ENCODE measurements at regions of chr11 and their contacts with region 1.

Region 1: DNA sequence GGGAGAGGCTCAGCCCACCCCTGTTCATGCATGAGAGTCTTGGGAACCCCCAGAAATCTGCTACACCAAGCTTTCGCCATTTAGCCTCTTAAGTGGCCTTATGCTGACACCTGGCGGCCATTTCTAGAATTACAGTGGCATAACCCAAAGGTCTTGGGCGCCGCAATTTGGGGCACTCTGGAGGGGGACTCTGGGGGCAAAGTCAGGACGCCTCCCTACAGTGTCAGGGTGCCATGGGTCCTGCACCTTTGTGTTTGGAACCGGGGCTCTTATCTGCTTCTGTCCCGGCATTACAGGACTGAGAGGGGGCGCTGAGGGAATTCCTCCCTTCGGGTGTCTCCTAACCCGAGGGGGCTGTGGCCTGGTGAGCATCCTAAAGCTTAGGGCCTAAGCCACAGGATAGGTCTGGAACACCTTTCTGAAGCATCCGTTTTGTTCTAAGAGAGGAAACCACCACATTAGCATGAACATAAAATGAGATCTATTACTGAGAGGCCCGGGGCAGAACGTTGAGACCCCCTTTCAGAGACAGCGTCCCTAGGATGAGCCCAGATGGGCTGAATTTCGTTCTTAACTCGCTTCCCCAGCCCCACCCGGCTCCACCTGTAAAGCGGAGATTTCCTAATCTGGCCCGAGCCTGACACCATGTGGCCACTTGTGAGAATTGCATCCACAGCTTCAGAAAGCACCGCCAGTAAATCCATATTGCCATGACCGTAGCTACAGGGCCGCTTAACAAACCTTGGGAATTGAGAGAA is 9.3 kb downstream of the INS start:
- DNase-seq: peak; percentile 80 to 87 (median 82)
- ATAC-seq: peak; percentile 80
- H3K4me3 ChIP-seq: no peak overlapping the region
- H3K27ac ChIP-seq: no peak overlapping the region
- H3K4me1 ChIP-seq: peaks cover 0 to 26% of the 10 kb centered on the region in 2 experiments; a peak in 1 of 5 replicates
- H3K27me3 ChIP-seq: peaks cover 0 to 44% of the 10 kb centered on the region in 2 experiments; a peak in 3 of 5 replicates
- CTCF ChIP-seq: peak; percentile 75 to 83 (median 80)
- EP300 ChIP-seq: no peak
- POLR2A ChIP-seq: no peak
- RAD21 ChIP-seq: peak; percentile 53 to 76

Region 2: DNA sequence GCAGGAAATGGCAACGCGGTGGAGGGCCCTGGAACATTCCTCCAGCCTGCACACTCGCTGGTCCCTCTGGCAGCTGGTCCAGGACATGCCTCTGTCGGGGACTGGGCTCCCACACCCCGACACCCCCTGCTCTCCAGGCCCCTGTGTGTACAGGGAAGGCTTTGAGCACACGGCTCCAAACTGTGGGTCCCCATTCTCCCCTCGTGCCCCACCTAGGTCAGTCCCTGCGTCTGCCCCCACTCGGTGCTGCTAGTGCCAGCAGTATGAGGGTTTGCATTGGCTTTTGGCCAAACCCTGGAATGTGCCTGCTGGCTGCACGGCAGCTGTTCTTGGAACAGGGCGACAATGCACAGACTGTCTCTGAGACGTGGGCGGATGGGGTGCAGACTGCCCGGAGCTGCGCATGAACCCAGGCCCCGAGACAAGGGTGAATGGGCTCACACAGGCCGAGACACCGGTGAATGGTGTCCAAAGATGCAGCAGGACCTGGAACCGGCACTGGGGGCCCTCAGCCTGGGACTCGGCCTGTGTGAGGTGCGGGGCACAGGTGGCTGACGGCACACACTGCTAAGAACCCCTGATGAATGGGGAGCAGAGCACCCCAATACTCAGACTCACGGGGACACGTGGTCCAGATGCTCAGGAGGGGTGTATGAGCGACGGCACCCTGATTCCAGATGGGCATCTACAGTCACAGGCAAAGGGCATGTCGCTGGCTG is 324.4 kb before region 1 on chr11:
- CTCF ChIA-PET with region 1: interaction called, 3 read pairs
- POLR2A ChIA-PET with region 1: no interaction called
- in situ Hi-C with region 1: no loop called
- intact Hi-C with region 1: loop called (anchors 5 kb)
- DNase-seq: no peak
- ATAC-seq: no peak
- H3K4me3 ChIP-seq: no peak overlapping the region
- H3K27ac ChIP-seq: no peak overlapping the region
- H3K4me1 ChIP-seq: peaks cover 0 to 50% of the 10 kb centered on the region in 2 experiments; a peak in 2 of 5 replicates
- H3K27me3 ChIP-seq: peaks cover 0 to 44% of the 10 kb centered on the region in 2 experiments; a peak in 3 of 5 replicates
- CTCF ChIP-seq: no peak
- EP300 ChIP-seq: no peak
- POLR2A ChIP-seq: no peak
- RAD21 ChIP-seq: no peak

Region 3: GRCh38 chr11:1852877-1853276 is 298.8 kb before region 1 on chr11 and contains the start of gene LSP1:
- CTCF ChIA-PET with region 1: no interaction called
- POLR2A ChIA-PET with region 1: no interaction called
- in situ Hi-C with region 1: loop called (anchors 10 kb)
- intact Hi-C with region 1: no loop called
- DNase-seq: no peak
- ATAC-seq: no peak
- H3K4me3 ChIP-seq: no peak within 1 kb of the TSS
- H3K27ac ChIP-seq: no peak within 1 kb of the TSS
- H3K4me1 ChIP-seq: peaks cover 0 to 21% of the 10 kb centered on the region in 2 experiments; a peak in 2 of 5 replicates
- H3K27me3 ChIP-seq: peaks cover 27 to 87% of the 10 kb centered on the region in 2 experiments; a peak in 4 of 5 replicates
- CTCF ChIP-seq: no peak
- EP300 ChIP-seq: no peak
- POLR2A ChIP-seq: no peak
- RAD21 ChIP-seq: no peak
- polyA plus RNA-seq, gene LSP1: 0.38 TPM in 1 of 2 experiments, not detected in the other

Region 4: DNA sequence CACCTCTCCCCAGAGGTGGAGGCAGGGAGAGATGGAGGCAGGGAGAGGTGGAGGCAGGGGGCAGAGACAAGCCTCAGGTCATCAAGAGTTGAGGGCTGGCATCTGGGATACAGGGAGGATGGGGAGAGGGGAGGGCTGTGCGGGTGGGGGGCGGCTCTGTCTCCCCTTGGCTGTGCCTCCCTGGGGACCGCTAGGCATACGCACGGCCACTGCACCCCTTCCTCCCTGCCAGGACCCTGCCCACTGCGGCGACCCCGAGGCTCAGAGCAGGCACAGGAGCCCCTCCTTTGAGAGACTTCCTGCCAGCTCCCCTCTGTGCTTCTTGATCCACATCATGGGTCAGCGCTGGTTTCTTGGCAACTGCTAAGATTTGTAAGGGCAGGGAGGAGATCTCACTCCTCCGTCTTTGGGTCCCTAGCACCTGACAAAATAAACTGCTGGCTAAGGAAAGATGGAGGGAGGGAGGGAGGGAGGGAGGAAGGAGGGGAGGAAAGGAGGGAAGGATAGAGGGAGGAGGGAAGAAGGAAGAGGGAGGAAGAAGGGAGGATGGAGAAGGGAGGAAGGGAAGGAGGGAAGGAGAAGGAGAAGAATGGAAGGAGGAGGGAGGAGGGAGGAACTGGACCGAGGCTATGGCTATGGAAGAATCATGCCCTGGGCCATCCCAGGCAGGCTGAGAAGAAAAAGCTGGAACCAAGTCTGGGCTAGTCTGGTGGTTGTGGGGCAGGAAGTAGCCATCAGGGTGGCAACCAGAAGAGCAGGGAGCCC is 278.4 kb before region 1 on chr11:
- CTCF ChIA-PET with region 1: no interaction called
- POLR2A ChIA-PET with region 1: no interaction called
- in situ Hi-C with region 1: no loop called
- intact Hi-C with region 1: no loop called
- DNase-seq: no peak
- ATAC-seq: no peak
- H3K4me3 ChIP-seq: no peak overlapping the region
- H3K27ac ChIP-seq: no peak overlapping the region
- H3K4me1 ChIP-seq: peaks cover 0 to 44% of the 10 kb centered on the region in 2 experiments; a peak in 2 of 5 replicates
- H3K27me3 ChIP-seq: peaks cover 15 to 63% of the 10 kb centered on the region in 2 experiments; a peak in 4 of 5 replicates
- CTCF ChIP-seq: no peak
- EP300 ChIP-seq: no peak
- POLR2A ChIP-seq: no peak
- RAD21 ChIP-seq: no peak

Region 5: DNA sequence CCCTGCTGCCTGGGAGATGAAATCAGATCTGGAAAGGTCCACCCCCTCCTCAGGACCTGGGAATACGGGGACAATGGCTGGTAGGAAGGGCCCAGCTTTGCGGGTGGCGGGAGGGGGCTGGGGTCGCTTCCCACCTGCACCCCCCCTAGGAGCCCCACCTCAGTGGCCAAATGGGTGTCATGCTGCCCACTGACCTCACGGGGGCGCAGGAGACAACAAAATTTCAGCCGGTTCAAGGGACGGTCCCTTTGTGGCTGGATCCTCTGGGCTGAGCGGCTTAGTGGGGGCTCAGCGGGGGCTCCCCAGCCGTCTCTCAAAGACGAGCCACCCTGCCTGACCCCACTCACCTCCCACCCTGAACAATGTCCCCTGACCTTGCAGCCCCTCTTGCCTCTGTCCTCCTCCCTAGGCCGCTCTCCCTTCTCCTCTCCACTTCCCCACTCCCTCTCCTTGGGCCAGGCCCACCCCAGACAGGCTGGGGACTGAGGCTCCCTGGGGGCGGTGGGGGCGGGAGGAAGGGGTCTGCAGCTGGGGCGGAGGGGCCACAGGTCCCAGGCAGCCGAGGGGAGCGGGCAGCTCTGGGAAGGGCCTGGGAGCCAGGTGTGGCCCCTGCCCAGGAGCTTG is 114.7 kb before region 1 on chr11:
- CTCF ChIA-PET with region 1: interaction called, 111 read pairs
- POLR2A ChIA-PET with region 1: interaction called, 7 read pairs
- in situ Hi-C with region 1: no loop called
- intact Hi-C with region 1: no loop called
- DNase-seq: no peak
- ATAC-seq: peak; percentile 90
- H3K4me3 ChIP-seq: no peak overlapping the region
- H3K27ac ChIP-seq: no peak overlapping the region
- H3K4me1 ChIP-seq: no peaks in the 10 kb centered on the region
- H3K27me3 ChIP-seq: no peaks in the 10 kb centered on the region
- CTCF ChIP-seq: no peak
- EP300 ChIP-seq: no peak
- POLR2A ChIP-seq: no peak
- RAD21 ChIP-seq: no peak

Region 6: DNA sequence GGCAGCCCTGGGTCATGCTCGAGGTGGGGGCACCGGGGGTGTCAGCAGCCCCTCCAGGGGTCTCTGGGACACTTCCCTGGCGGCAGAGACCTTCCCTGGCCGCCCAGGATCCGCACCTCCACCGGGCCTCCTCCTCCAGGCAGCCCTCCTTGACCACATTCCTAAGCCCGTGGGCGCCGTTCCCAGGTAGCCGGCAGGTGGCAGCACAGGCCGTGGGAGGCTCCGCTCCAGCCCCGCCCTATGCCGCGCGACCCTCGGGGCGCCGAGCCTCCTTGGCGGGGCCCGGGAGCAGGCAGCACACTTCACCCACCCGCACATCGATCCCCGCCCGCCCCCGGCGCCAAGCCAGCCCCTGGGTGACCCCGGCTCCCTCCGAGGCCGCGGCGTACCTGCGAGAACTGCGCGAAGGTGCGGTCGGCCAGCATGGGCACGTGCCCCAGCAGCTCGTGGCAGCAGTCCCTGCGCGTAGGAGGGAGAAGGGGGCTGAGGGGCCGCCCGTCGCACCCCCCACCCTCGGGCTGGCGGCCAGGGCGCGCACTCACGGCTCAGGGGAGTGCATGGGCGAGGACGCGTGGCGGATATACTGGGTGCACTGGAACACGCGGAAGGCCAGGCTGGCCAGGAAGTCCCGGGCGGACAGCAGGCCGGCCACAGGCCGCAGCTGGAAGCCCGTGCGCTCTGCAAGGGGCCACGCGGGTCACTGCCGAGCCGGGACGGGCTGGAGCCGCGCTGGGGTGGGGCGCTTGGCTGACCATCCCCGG is 14.6 kb after region 1 on chr11:
- CTCF ChIA-PET with region 1: no interaction called
- POLR2A ChIA-PET with region 1: no interaction called
- in situ Hi-C with region 1: no loop called
- intact Hi-C with region 1: no loop called
- DNase-seq: peak; percentile 35 to 76 (median 65)
- ATAC-seq: peak; percentile 83
- H3K4me3 ChIP-seq: no peak overlapping the region
- H3K27ac ChIP-seq: no peak overlapping the region
- H3K4me1 ChIP-seq: peaks cover 0 to 65% of the 10 kb centered on the region in 2 experiments; a peak in 2 of 5 replicates
- H3K27me3 ChIP-seq: peaks cover 0 to 31% of the 10 kb centered on the region in 2 experiments; a peak in 3 of 5 replicates
- CTCF ChIP-seq: peak; percentile 49 to 75 (median 59); a peak in 5 of 6 replicates
- EP300 ChIP-seq: no peak
- POLR2A ChIP-seq: no peak
- RAD21 ChIP-seq: peak; percentile 21 to 57; a peak in 3 of 4 replicates

Region 7: DNA sequence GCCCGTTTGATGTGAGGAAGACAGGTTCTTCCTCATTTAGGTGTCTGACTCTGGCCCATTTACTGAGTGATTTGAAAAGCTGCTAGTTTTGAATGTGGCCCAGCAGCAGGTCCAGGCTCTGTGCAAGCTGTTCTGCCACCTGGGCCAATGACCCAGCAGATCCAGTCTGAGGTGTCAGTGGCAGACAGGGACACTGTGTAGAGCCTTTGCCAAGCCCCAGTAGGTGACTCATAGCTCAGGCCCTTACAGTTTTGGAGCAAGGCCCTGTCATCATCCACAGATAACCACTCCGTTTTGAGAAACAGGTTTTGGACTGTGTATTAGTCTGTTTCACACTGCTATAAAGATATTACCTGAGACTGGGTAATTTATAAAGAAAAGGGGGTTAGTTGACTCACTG is 174.0 kb after region 1 on chr11:
- CTCF ChIA-PET with region 1: no interaction called
- POLR2A ChIA-PET with region 1: no interaction called
- in situ Hi-C with region 1: no loop called
- intact Hi-C with region 1: no loop called
- DNase-seq: no peak
- ATAC-seq: peak; percentile 61; the same call in 1 of the 3 replicates
- H3K4me3 ChIP-seq: no peak overlapping the region
- H3K27ac ChIP-seq: no peak overlapping the region
- H3K4me1 ChIP-seq: peaks cover 0 to 4% of the 10 kb centered on the region in 2 experiments; a peak in 2 of 5 replicates
- H3K27me3 ChIP-seq: peaks cover 26 to 60% of the 10 kb centered on the region in 2 experiments; a peak in 4 of 5 replicates
- CTCF ChIP-seq: no peak
- EP300 ChIP-seq: no peak
- POLR2A ChIP-seq: no peak
- RAD21 ChIP-seq: no peak

Measured in K562 (cell line).